ENCODE measurements at regions of chr5 and their contacts with region 1.

Region 1: GRCh38 chr5:39376293-39376714 is 12.0 kb upstream of the C9 start:
- DNase-seq: no peak
- H3K4me3 ChIP-seq: no peak overlapping the region
- H3K27ac ChIP-seq: no peak overlapping the region
- H3K4me1 ChIP-seq: no peaks in the 10 kb centered on the region
- H3K27me3 ChIP-seq: no peaks in the 10 kb centered on the region
- CTCF ChIP-seq: peak; percentile 37 to 83 (median 72)

Region 2: GRCh38 chr5:39264528-39264927 is 111.8 kb before region 1 on chr5:
- intact Hi-C with region 1: no loop called
- DNase-seq: no peak
- H3K4me3 ChIP-seq: no peak overlapping the region
- H3K27ac ChIP-seq: no peak overlapping the region
- H3K4me1 ChIP-seq: no peaks in the 10 kb centered on the region
- H3K27me3 ChIP-seq: no peaks in the 10 kb centered on the region
- CTCF ChIP-seq: no peak

Region 3: GRCh38 chr5:39547553-39548154 is 171.3 kb after region 1 on chr5:
- intact Hi-C with region 1: loop called (anchors 1 kb)
- DNase-seq: peak in 1 of 2 donors; percentile 70
- H3K4me3 ChIP-seq: no peak overlapping the region
- H3K27ac ChIP-seq: no peak overlapping the region
- H3K4me1 ChIP-seq: peaks cover 0 to 6% of the 10 kb centered on the region in 2 donors
- H3K27me3 ChIP-seq: no peaks in the 10 kb centered on the region
- CTCF ChIP-seq: peak; percentile 44 to 71 (median 61)